AG04450 (cell line): ENCODE measurements at regions of chr10 and their contacts with region 1.

Region 1: DNA sequence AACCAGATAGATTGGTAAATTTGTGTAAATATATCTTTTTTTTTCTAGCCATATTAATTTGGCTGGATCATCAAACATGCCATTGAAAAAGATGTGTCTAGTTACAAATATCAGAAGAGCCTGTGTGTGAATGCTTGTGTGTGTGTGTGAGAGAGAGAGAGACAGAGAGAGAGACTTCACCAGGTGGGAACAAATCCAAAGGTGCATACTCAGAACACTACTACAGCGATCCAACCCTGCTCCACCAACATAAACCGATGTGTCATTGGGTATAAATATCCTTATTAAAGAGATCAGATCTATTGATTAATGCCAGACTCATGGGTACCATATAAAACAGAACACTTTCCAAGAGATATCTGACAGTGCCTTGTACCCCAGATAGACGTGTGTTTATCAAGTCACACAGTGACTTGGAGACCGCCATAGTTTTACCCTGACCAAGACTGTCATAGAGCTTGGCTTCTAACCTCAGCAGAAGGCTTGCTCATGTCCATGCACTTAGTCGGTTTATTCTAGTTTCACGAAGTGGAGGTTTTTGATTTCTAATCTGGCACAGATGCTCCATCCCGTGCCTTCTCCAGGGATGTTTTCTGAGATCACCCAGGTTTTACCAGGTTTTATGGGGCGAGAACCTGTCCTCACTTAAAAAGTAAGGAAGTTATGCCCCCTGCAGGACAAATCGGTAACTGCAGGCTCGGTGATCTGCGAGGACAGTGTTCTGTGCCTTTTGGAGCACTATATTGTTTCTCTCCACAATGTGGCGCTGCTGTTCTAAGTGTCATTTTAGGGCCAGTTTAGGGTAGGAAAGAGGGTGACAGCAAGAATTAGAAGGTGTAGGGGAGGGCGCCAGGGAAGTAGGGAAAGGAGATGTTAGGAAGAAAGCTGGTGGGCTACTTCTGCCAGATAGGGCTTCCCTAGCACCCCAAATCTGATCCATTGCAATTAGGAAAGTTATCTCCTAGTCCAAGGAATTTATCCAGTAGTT is 29.3 kb upstream of the WNT8B start:
- DNase-seq: peak; percentile 81
- H3K4me3 ChIP-seq: no peak overlapping the region
- H3K27ac ChIP-seq: no peak overlapping the region
- H3K27me3 ChIP-seq: peaks cover 3% of the 10 kb centered on the region
- CTCF ChIP-seq: peak; percentile 99

Region 2: DNA sequence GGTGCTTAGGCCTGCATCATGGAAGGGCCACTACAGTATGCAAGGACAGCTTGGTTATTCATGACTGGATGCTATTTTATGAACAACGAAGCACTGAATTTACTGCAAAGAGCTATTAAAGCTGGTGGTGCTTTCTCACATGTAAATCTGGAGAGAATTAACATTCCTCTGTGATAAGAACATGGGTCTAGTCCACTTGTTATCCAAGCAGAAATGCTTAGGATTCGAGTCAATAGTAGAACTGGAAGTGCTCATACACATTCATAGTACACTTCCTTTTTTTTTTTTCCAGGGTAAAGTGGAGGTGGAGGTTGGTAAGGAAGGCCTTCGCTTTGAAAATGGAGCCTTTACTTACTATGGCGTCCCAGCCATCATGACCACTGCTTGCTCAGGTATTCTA is 1069.4 kb before region 1 on chr10:
- CTCF ChIA-PET with region 1: no interaction called
- POLR2A ChIA-PET with region 1: no interaction called
- DNase-seq: peak; percentile 18
- H3K4me3 ChIP-seq: no peak overlapping the region
- H3K27ac ChIP-seq: no peak overlapping the region
- H3K27me3 ChIP-seq: no peaks in the 10 kb centered on the region
- CTCF ChIP-seq: no peak

Region 3: GRCh38 chr10:100330079-100330478 is 103.5 kb before region 1 on chr10 and contains the start of gene PKD2L1:
- CTCF ChIA-PET with region 1: interaction called, 381 read pairs
- POLR2A ChIA-PET with region 1: no interaction called
- DNase-seq: no peak
- H3K4me3 ChIP-seq: no peak within 1 kb of the TSS
- H3K27ac ChIP-seq: no peak within 1 kb of the TSS
- H3K27me3 ChIP-seq: peaks cover 44% of the 10 kb centered on the region
- CTCF ChIP-seq: no peak
- polyA plus RNA-seq, gene PKD2L1: not detected in 2 replicates

Region 4: DNA sequence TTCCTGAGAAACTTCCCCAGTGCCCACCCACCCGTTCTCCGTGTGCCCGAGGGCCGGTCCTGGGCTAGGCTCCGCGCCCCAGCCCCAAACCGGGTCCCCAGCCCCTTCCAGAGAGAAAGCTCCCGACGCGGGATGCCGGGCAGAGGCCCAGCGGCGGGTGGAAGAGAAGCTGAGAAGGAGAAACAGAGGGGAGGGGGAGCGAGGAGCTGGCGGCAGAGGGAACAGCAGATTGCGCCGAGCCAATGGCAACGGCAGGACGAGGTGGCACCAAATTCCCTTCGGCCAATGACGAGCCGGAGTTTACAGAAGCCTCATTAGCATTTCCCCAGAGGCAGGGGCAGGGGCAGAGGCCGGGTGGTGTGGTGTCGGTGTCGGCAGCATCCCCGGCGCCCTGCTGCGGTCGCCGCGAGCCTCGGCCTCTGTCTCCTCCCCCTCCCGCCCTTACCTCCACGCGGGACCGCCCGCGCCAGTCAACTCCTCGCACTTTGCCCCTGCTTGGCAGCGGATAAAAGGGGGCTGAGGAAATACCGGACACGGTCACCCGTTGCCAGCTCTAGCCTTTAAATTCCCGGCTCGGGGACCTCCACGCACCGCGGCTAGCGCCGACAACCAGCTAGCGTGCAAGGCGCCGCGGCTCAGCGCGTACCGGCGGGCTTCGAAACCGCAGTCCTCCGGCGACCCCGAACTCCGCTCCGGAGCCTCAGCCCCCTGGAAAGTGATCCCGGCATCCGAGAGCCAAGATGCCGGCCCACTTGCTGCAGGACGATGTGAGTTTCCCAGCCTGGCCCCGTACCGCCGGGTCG is 86.6 kb before region 1 on chr10 and contains the start of gene SCD:
- CTCF ChIA-PET with region 1: interaction called, 381 read pairs
- POLR2A ChIA-PET with region 1: no interaction called
- DNase-seq: peak; percentile 72
- H3K4me3 ChIP-seq: peak within 1 kb of the TSS; percentile 86
- H3K27ac ChIP-seq: peak within 1 kb of the TSS; percentile 57
- H3K27me3 ChIP-seq: no peaks in the 10 kb centered on the region
- CTCF ChIP-seq: no peak
- polyA plus RNA-seq, gene SCD: 133 and 148 TPM in 2 replicates

Region 5: GRCh38 chr10:100419911-100420449 is 13.6 kb before region 1 on chr10:
- CTCF ChIA-PET with region 1: interaction called, 10 read pairs
- POLR2A ChIA-PET with region 1: interaction called, 3 read pairs
- DNase-seq: no peak
- H3K4me3 ChIP-seq: no peak overlapping the region
- H3K27ac ChIP-seq: no peak overlapping the region
- H3K27me3 ChIP-seq: peaks cover 21% of the 10 kb centered on the region
- CTCF ChIP-seq: no peak

Region 6: DNA sequence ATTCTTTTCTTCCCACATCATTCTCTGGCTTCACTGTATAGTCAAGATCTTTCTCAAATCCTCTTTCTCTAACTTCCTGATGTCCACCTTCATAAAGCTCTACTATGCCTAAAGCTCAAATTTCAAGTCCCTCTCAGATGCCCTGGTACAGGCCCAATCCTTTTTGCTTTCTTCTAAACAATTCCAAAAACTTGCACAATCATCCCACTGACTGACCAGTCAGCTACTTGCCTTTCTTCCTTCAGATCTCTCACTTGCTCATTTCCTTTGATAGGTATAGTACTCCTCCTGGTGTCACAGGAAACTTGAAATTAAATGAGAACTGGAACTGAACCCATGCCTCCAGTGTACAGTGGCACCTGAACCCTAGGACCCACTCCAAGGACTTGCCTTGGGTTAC is 67.9 kb after region 1 on chr10:
- CTCF ChIA-PET with region 1: interaction called, 93 read pairs
- POLR2A ChIA-PET with region 1: no interaction called
- DNase-seq: peak; percentile 11
- H3K4me3 ChIP-seq: no peak overlapping the region
- H3K27ac ChIP-seq: no peak overlapping the region
- H3K27me3 ChIP-seq: no peaks in the 10 kb centered on the region
- CTCF ChIP-seq: no peak

Region 7: GRCh38 chr10:100529475-100530298 is 96.1 kb after region 1 on chr10 and contains the start of gene NDUFB8:
- CTCF ChIA-PET with region 1: interaction called, 14 read pairs
- POLR2A ChIA-PET with region 1: no interaction called
- DNase-seq: peak; percentile 39
- H3K4me3 ChIP-seq: peak within 1 kb of the TSS; percentile 92
- H3K27ac ChIP-seq: peak within 1 kb of the TSS; percentile 39
- H3K27me3 ChIP-seq: no peaks in the 10 kb centered on the region
- CTCF ChIP-seq: no peak
- polyA plus RNA-seq, gene NDUFB8: 204 and 211 TPM in 2 replicates